Sigmoid colon (tissue), 7 donors: ENCODE measurements at regions of chr5 and their contacts with region 1.

Region 1: GRCh38 chr5:139745800-139746690 is 49.6 kb upstream of the PSD2 start:
- DNase-seq: peak; percentile 87
- H3K4me3 ChIP-seq: peak overlapping the region; percentile 7 to 52 (median 44)
- H3K27ac ChIP-seq: peak overlapping the region; percentile 33 to 66 (median 61)
- H3K4me1 ChIP-seq: peaks cover 0 to 36% (median 34%) of the 10 kb centered on the region in 4 donors
- H3K27me3 ChIP-seq: peaks cover 18 to 37% (median 19%) of the 10 kb centered on the region in 3 donors
- CTCF ChIP-seq: no peak
- EP300 ChIP-seq: no peak
- POLR2A ChIP-seq: no peak

Region 2: GRCh38 chr5:139711067-139711905 is 34.8 kb before region 1 on chr5:
- intact Hi-C with region 1: loop called (anchors 5 kb)
- DNase-seq: no peak
- H3K4me3 ChIP-seq: peak overlapping the region; percentile 24 to 58 (median 48)
- H3K27ac ChIP-seq: peak overlapping the region; percentile 43 to 46 (median 44)
- H3K4me1 ChIP-seq: peaks cover 0 to 40% (median 38%) of the 10 kb centered on the region in 4 donors
- H3K27me3 ChIP-seq: peaks cover 0 to 23% (median 12%) of the 10 kb centered on the region in 3 donors
- CTCF ChIP-seq: no peak
- EP300 ChIP-seq: no peak
- POLR2A ChIP-seq: no peak